HEK293 (cell line): ENCODE measurements at regions of chr6 and their contacts with region 1.

Region 1: DNA sequence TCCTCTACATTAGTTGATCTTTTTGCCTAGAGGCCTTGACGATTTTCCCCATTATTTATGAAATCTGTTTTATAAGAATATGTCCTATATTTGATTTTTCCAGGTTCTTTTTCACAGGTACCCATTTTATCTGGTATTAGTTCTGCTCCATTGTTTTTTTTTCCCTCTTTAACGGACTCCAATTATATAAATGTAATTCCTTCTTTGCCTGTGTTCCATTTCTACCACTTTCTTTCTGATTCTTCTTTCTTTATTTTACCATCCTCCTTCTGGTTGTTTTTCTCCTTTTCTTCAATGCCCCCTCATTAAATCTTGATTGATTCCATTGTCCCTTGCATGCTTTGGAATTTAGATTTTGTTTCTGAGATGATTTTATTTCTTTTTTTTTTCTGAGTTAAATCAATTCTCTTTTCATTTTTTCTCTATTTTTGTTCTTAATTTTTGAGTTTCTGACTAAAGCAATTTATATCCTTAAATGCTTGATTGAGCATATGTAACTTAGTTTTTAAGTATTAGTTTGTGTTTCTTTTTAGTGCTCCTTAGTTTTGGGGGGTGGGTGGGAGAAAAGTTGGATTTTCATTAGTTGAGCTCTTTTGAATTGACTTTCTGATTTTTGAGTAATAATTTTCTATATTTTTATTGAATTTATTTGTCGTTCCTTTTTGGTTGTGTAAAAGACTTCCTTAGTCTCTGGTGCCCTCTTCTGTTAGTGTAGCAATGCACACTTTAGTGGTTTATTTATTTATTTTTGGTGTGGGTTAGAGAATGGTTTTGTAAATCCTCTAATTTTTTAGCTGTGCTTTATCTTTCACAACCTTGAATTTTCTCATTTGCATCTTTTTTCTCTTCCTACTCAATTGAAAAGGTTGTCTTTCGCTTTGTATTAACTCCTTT is 140.8 kb downstream of the FARS2 start:
- H3K4me3 ChIP-seq: no peak overlapping the region
- H3K27ac ChIP-seq: no peak overlapping the region
- H3K4me1 ChIP-seq: no peaks in the 10 kb centered on the region
- CTCF ChIP-seq: 0 out of 2 replicates have a peak, but pooled peaks have one; percentile 23

Region 2: GRCh38 chr6:5125152-5126006 is 276.7 kb before region 1 on chr6:
- CTCF ChIA-PET with region 1: no interaction called
- POLR2A ChIA-PET with region 1: no interaction called
- H3K4me3 ChIP-seq: no peak overlapping the region
- H3K27ac ChIP-seq: no peak overlapping the region
- H3K4me1 ChIP-seq: no peaks in the 10 kb centered on the region
- CTCF ChIP-seq: no peak

Region 3: DNA sequence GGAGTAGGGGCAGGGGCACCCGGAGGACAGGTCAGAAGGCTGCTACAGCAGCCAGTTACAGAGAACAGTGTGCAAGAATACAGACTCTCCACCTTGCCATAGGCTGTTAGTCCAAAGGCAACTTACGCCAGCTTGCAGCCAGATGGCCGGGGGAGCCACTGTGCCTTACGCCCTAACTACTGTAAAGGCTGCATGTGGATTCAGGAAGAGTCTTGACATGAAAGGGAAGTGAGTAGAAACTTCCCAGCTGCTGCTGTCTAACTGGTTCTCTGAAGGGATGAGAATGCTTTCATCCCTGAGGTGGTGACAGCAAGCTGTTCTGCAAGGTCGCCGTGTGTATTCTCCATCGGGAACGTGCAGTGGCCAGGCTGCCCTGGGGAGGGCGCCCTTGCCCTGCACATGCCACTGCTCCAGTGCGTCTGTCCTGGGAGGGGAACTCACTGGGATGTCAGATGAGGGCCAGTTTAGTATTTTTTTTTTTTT is 187.5 kb before region 1 on chr6:
- CTCF ChIA-PET with region 1: interaction called, 18 read pairs
- POLR2A ChIA-PET with region 1: no interaction called
- H3K4me3 ChIP-seq: no peak overlapping the region
- H3K27ac ChIP-seq: no peak overlapping the region
- H3K4me1 ChIP-seq: no peaks in the 10 kb centered on the region
- CTCF ChIP-seq: peak; percentile 77

Region 4: DNA sequence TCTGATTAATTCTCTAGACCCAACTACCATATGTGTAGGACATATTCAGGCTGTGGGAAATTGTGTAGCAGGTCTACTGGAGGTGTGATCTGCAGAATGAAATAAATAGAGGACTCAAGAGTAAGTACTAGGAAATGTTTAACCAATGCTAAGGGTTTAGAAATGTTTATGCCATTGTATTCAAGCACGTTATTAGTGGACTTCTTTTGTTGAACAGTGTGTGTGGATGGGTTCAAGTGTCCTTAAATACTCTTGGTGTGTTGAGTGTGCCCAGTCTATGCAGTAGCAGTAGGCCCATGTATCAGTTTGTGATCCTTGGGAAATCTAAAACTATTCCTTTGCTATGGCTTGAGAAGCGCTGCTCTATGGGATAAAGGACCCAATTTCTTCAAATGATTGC is 28.7 kb before region 1 on chr6:
- CTCF ChIA-PET with region 1: no interaction called
- POLR2A ChIA-PET with region 1: no interaction called
- H3K4me3 ChIP-seq: no peak overlapping the region
- H3K27ac ChIP-seq: no peak overlapping the region
- H3K4me1 ChIP-seq: no peaks in the 10 kb centered on the region
- CTCF ChIP-seq: no peak